ENCODE measurements at regions of chr22 and their contacts with region 1.

Region 1: GRCh38 chr22:22884010-22884887 is 3.4 kb upstream of the IGLL5 start:
- DNase-seq: peak; percentile 57 to 100 (median 78)
- ATAC-seq: peak; percentile 94
- H3K4me3 ChIP-seq: no peak overlapping the region
- H3K27ac ChIP-seq: no peak overlapping the region
- H3K4me1 ChIP-seq: peaks cover 0 to 9% of the 10 kb centered on the region in 2 experiments; a peak in 1 of 5 replicates
- H3K27me3 ChIP-seq: peaks cover 0 to 46% of the 10 kb centered on the region in 2 experiments; a peak in 2 of 5 replicates
- CTCF ChIP-seq: no peak
- EP300 ChIP-seq: no peak
- POLR2A ChIP-seq: no peak
- RAD21 ChIP-seq: no peak

Region 2: GRCh38 chr22:22552630-22553029 is 331.6 kb before region 1 on chr22:
- CTCF ChIA-PET with region 1: no interaction called
- POLR2A ChIA-PET with region 1: no interaction called
- in situ Hi-C with region 1: no loop called
- intact Hi-C with region 1: no loop called
- DNase-seq: peak; percentile 84 to 87 (median 86)
- ATAC-seq: peak; percentile 21
- H3K4me3 ChIP-seq: no peak overlapping the region
- H3K27ac ChIP-seq: peak overlapping the region; percentile 2; the same call in 2 of the 3 replicates
- H3K4me1 ChIP-seq: peaks cover 52 to 63% of the 10 kb centered on the region in 2 experiments
- H3K27me3 ChIP-seq: no peaks in the 10 kb centered on the region
- CTCF ChIP-seq: no peak
- EP300 ChIP-seq: no peak
- POLR2A ChIP-seq: no peak
- RAD21 ChIP-seq: no peak

Region 3: DNA sequence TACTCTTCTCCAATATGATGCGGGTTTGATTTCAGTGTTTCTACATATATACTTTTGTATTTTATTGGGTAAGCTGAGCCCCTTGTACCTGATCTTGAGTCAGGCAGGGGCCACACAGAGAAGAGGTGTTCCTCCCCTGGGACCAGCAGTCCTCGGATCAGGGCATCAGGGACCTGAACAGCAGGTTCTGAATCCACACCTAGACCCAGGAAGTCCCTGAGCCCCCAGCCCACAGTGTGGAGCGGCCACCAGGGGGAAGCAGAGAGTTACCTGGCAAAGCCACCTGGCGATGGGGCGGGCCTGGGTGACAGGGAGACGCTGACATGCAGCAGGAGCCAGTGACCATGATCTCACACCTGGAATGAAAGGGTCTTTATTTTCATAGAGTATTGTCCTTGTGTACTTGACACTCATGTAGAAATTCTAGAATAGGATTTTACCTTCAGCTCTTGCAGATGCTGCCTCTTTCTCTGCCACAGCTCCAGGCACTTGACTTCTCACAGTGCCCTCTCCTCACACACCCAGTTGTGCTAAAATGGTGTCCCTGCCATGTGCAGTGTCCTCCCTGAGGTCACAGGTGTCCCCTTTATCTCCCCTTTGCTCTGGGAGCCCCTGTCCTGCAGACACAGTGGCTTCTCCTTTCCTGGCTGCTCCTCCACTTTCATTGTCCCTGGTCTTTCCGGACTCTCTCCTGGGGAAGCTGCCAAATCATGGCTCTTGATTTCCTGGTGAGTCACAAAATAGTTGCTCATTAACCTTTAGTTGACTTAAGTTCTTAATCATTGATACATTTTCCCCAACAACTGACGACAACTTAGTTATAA is 191.3 kb before region 1 on chr22:
- CTCF ChIA-PET with region 1: interaction called, 11 read pairs
- POLR2A ChIA-PET with region 1: no interaction called
- in situ Hi-C with region 1: no loop called
- intact Hi-C with region 1: loop called (anchors 1 kb)
- DNase-seq: peak; percentile 96 to 100 (median 99)
- ATAC-seq: peak; percentile 94
- H3K4me3 ChIP-seq: no peak overlapping the region
- H3K27ac ChIP-seq: no peak overlapping the region
- H3K4me1 ChIP-seq: no peaks in the 10 kb centered on the region
- H3K27me3 ChIP-seq: peaks cover 0 to 27% of the 10 kb centered on the region in 2 experiments; a peak in 2 of 5 replicates
- CTCF ChIP-seq: no peak
- EP300 ChIP-seq: no peak
- POLR2A ChIP-seq: no peak
- RAD21 ChIP-seq: no peak

Region 4: GRCh38 chr22:22748297-22748743 is 135.9 kb before region 1 on chr22:
- CTCF ChIA-PET with region 1: interaction called, 23 read pairs
- POLR2A ChIA-PET with region 1: interaction called, 16 read pairs
- in situ Hi-C with region 1: no loop called
- intact Hi-C with region 1: loop called (anchors 1 kb)
- DNase-seq: peak; percentile 73 to 86 (median 82)
- ATAC-seq: peak; percentile 87
- H3K4me3 ChIP-seq: no peak overlapping the region
- H3K27ac ChIP-seq: no peak overlapping the region
- H3K4me1 ChIP-seq: no peaks in the 10 kb centered on the region
- H3K27me3 ChIP-seq: peaks cover 4 to 30% of the 10 kb centered on the region in 2 experiments; a peak in 3 of 5 replicates
- CTCF ChIP-seq: no peak
- EP300 ChIP-seq: no peak
- POLR2A ChIP-seq: no peak
- RAD21 ChIP-seq: peak in 1 of 2 experiments; percentile 76; a peak in 2 of 4 replicates

Region 5: DNA sequence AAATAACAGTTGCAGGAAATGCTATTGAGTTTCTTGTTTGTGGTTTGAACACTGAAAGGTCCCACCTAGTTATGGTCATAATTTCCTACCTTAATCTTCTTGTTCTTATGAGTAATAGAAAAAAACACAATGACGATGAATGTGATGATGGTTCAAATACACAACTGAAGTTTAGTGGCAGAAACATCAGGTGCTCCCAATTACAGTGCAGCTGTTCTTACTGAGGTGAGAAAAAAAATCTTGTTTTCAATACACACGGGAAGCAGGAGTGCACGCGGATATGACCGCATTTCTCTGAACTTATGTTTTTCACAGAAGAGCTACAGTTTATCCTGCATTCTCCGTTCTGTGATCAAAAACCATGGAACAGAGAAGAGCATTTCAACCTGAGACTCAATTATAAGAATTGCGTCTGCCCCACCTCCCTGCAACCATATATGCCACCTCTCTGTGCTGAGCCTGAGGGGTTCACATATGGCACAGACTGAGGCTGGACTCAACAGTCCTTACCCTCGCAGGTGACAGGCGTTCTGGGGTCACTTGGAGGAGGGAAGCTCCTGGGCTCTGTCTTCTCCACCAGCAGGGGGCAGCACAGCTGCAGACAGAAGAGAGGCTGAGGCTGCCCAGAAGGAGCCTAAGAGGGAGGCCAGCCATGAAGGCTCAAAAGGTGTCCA is 96.3 kb before region 1 on chr22:
- CTCF ChIA-PET with region 1: interaction called, 69 read pairs
- POLR2A ChIA-PET with region 1: interaction called, 13 read pairs
- in situ Hi-C with region 1: no loop called
- intact Hi-C with region 1: loop called (anchors 1 kb)
- DNase-seq: peak; percentile 97 to 100 (median 99)
- ATAC-seq: peak; percentile 96
- H3K4me3 ChIP-seq: no peak overlapping the region
- H3K27ac ChIP-seq: no peak overlapping the region
- H3K4me1 ChIP-seq: peaks cover 0 to 3% of the 10 kb centered on the region in 2 experiments; a peak in 1 of 5 replicates
- H3K27me3 ChIP-seq: peaks cover 26 to 30% of the 10 kb centered on the region in 2 experiments; a peak in 4 of 5 replicates
- CTCF ChIP-seq: no peak
- EP300 ChIP-seq: no peak
- POLR2A ChIP-seq: no peak
- RAD21 ChIP-seq: no peak

Region 6: DNA sequence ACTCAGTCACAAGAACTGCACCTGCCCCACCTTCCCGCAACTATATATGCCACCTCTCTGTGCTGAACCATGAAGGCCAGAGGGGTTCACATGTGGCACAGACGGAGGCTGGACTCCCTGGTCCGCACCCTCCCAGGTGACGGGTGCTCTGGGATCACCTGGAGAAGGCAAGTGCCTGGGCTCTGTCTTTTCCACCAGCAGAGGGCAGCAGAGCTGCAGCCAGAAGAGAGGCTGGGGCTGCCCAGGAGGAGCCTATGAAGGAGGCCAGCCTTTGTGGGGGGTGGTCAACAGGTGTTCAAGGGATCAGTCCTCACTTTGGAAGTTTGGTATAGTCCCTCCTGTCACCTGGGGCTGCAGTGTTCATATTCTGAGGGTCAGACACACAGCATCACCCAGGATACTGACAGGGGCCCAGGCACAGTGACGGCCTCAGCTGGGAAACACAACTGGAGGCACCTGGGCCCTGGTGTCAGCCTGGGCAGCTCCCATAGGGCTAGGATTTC is 35.8 kb before region 1 on chr22:
- CTCF ChIA-PET with region 1: interaction called, 90 read pairs
- POLR2A ChIA-PET with region 1: interaction called, 13 read pairs
- in situ Hi-C with region 1: no loop called
- intact Hi-C with region 1: loop called (anchors 1 kb)
- DNase-seq: peak; percentile 94 to 100 (median 98)
- ATAC-seq: peak; percentile 98
- H3K4me3 ChIP-seq: no peak overlapping the region
- H3K27ac ChIP-seq: no peak overlapping the region
- H3K4me1 ChIP-seq: no peaks in the 10 kb centered on the region
- H3K27me3 ChIP-seq: peaks cover 0 to 8% of the 10 kb centered on the region in 2 experiments; a peak in 1 of 5 replicates
- CTCF ChIP-seq: no peak
- EP300 ChIP-seq: no peak
- POLR2A ChIP-seq: no peak
- RAD21 ChIP-seq: no peak

Region 7: DNA sequence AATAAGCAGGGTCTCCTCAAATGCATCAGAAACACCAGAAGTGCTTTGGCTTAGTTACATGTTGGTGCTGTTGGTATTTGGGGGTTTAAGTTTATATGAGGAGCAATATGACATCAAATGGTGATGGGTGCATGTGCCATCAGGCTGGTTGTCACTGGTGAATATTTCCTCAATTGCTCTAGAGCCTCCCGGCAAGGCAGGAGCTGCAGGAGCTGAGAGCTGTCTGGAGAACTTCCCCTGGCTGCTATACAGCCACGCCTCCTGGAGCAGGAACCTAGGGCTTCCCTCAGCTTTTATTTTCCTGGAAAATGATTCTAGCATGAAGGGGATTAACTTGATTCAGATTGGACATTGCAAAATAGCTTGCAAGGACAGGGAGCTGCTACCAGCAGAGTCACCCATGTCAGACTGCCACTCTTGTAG is 19.1 kb after region 1 on chr22:
- CTCF ChIA-PET with region 1: no interaction called
- POLR2A ChIA-PET with region 1: interaction called, 41 read pairs
- in situ Hi-C with region 1: no loop called
- intact Hi-C with region 1: loop called (anchors 2 kb)
- DNase-seq: peak in 3 of 4 experiments; percentile 53 to 59 (median 53)
- ATAC-seq: no peak
- H3K4me3 ChIP-seq: no peak overlapping the region
- H3K27ac ChIP-seq: no peak overlapping the region
- H3K4me1 ChIP-seq: no peaks in the 10 kb centered on the region
- H3K27me3 ChIP-seq: peaks cover 37 to 44% of the 10 kb centered on the region in 2 experiments; a peak in 4 of 5 replicates
- CTCF ChIP-seq: no peak
- EP300 ChIP-seq: no peak
- POLR2A ChIP-seq: no peak
- RAD21 ChIP-seq: no peak

Region 8: GRCh38 chr22:22976033-22976922 is 92.0 kb after region 1 on chr22:
- CTCF ChIA-PET with region 1: no interaction called
- POLR2A ChIA-PET with region 1: no interaction called
- in situ Hi-C with region 1: no loop called
- intact Hi-C with region 1: no loop called
- DNase-seq: peak in 3 of 4 experiments; percentile 40 to 69 (median 61)
- ATAC-seq: peak; percentile 86
- H3K4me3 ChIP-seq: no peak overlapping the region
- H3K27ac ChIP-seq: no peak overlapping the region
- H3K4me1 ChIP-seq: no peaks in the 10 kb centered on the region
- H3K27me3 ChIP-seq: peaks cover 0 to 4% of the 10 kb centered on the region in 2 experiments; a peak in 1 of 5 replicates
- CTCF ChIP-seq: no peak
- EP300 ChIP-seq: no peak
- POLR2A ChIP-seq: no peak
- RAD21 ChIP-seq: no peak

Region 9: DNA sequence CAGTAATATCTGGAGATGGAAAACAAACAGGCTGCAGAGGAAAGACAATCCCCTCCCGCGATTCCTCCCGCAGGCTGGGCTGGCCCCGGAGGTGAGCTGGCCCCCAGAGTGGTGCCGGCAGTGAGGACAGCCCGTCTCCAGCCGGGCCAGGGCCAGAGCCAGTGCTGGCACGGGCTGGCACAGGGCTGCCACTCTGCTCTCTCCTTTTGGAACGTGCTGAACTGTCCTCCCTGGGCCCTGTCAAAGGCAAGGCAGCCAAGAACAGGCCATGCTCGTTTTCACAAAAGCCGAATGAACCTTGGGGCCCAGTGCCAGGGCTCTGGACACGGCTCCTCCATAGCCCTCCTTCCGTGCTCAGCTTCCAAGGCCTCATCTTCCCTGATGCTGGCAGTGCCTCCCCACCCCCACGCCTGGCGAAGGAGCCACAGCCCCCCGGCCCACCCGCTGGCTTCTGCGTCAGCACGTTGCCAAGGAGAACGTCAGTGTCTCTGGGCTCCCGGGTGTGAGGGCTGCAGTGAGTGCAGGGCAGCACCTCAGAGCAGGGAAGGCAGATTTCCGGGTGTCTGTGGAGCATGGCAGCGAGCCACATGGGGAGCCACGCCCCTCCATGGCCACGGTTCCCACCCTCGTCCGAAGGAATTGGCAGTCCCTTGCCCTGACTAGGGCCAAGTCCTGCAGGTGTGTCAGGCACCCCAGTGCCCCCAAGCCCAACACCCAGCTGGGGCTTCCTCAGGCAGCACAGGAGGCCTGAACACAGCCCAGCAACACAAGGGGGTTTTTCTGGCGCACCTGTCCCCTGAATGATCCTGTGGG is 214.7 kb after region 1 on chr22:
- CTCF ChIA-PET with region 1: no interaction called
- POLR2A ChIA-PET with region 1: no interaction called
- in situ Hi-C with region 1: no loop called
- intact Hi-C with region 1: no loop called
- DNase-seq: peak in 2 of 4 experiments; percentile 63
- ATAC-seq: no peak
- H3K4me3 ChIP-seq: no peak overlapping the region
- H3K27ac ChIP-seq: no peak overlapping the region
- H3K4me1 ChIP-seq: peaks cover 0 to 45% of the 10 kb centered on the region in 2 experiments; a peak in 3 of 5 replicates
- H3K27me3 ChIP-seq: peaks cover 95 to 100% of the 10 kb centered on the region in 2 experiments
- CTCF ChIP-seq: no peak
- EP300 ChIP-seq: no peak
- POLR2A ChIP-seq: no peak
- RAD21 ChIP-seq: no peak

Region 10: DNA sequence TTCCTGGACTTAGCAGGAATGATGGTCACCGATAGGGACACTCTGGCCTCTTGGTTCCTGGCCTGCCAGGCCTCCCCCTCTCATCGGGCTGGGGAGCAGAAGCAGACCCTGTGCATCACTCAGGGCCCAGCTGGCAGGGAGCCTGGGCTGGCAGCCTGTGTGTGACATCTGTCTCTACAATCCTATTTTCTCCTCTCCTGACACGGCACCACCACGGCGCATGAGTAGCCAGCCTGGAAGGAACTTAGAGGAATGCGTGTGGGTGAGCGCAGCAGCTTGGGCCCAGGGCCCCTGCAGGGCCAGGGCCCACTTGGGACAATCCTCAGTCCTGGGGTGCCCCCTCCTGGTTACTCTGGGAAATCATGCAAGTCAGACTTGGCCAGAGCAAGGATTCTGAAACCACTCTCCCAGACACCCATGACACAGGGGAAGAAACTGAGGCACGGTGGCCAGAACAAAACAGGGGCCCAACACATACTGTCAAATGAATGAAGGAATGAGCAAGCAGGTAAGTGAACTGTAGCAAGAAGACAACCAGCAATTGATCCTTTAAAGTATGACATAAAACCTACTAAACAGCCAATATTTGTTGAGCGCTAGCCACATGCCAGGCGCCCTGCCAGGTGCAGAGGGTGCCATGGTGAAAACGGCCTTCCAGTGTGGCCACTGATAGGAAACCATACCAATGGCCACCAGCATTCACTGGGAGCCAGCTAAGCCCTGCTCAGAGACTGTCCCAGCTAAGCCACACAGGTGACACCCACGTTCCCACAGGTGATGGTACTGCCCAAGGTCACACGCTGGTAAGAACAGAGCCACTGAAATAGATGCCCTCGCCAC is 244.2 kb after region 1 on chr22:
- CTCF ChIA-PET with region 1: interaction called, 6 read pairs
- POLR2A ChIA-PET with region 1: interaction called, 5 read pairs
- in situ Hi-C with region 1: no loop called
- intact Hi-C with region 1: loop called (anchors 1 kb)
- DNase-seq: peak; percentile 61 to 98 (median 62)
- ATAC-seq: peak; percentile 91
- H3K4me3 ChIP-seq: no peak overlapping the region
- H3K27ac ChIP-seq: no peak overlapping the region
- H3K4me1 ChIP-seq: peaks cover 0 to 9% of the 10 kb centered on the region in 2 experiments; a peak in 2 of 5 replicates
- H3K27me3 ChIP-seq: peaks cover 53 to 79% of the 10 kb centered on the region in 2 experiments
- CTCF ChIP-seq: peak in 1 of 3 experiments; percentile 100; a peak in 2 of 6 replicates
- EP300 ChIP-seq: peak; percentile 83
- POLR2A ChIP-seq: no peak
- RAD21 ChIP-seq: peak in 1 of 2 experiments; percentile 100; a peak in 2 of 4 replicates